ENCODE measurements at regions of chr19 and their contacts with region 1.

Region 1: GRCh38 chr19:48965040-48965805 is at the start of gene FTL:
- DNase-seq: peak; percentile 98 to 99 (median 98)
- H3K4me3 ChIP-seq: peak within 1 kb of the TSS; percentile 36 to 94 (median 58)
- H3K27ac ChIP-seq: peak within 1 kb of the TSS; percentile 71 to 96 (median 85)
- H3K4me1 ChIP-seq: peaks cover 31 to 34% of the 10 kb centered on the region in 2 donors
- H3K27me3 ChIP-seq: no peaks in the 10 kb centered on the region
- CTCF ChIP-seq: no peak
- POLR2A ChIP-seq: peak; percentile 100
- total RNA-seq, gene FTL: 3,284 to 11,726 (median 3,862) TPM

Region 2: DNA sequence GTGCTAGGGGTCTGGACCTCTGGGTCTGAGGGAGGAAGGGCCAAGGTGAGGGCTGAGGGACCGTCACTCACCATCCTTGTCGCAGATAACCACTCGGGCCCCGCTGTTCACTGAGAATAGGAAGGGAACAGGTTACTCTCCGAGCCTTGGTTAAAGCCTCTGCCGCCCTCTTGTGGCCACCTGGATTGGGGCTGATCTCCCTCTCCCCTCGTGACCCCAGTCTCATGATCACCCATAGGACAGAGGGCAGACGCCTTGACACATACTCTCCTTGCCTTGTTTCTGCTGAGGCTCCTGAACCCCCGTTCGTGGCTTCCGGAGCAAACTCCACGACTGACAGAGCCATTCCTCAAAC is 129.5 kb before region 1 on chr19:
- intact Hi-C with region 1: loop called in 1 of 2 experiments (anchors 5 kb)
- DNase-seq: peak; percentile 95 to 99 (median 97)
- H3K4me3 ChIP-seq: peak overlapping the region in 3 of 4 donors; percentile 62 to 67 (median 65)
- H3K27ac ChIP-seq: peak overlapping the region in 4 of 5 donors; percentile 39 to 91 (median 86)
- H3K4me1 ChIP-seq: peaks cover 4 to 7% of the 10 kb centered on the region in 2 donors
- H3K27me3 ChIP-seq: no peaks in the 10 kb centered on the region
- CTCF ChIP-seq: peak; percentile 76 to 97 (median 95)
- POLR2A ChIP-seq: peak in 1 of 2 donors; percentile 86

Region 3: DNA sequence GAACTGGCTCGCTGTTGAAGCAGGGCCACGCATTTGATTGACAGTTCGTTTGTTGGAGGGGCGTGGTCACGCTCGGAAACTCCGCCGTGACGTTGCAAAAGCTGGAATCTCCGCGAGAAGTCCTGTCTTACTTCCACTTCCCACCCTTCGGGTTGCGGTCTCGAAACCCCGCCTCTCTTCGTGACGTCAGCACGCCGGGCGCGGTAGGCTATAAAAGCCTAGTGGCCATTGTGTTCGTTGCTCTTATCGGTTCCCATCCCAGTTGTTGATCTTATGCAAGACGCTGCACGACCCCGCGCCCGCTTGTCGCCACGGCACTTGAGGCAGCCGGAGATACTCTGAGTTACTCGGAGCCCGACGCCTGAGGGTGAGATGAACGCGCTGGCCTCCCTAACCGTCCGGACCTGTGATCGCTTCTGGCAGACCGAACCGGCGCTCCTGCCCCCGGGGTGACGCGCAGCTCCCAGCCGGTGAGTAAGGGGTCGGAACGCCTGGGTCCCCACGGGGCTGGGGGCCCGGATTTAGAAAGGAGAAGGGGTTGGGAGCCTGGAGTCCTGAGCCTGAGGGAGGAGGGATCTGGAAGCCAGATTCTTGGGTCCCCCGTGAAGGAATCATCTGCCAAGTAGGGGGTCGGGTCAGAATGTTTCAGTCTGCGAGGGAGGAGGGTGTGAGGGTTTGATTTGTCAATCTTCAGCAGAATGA is 92.9 kb before region 1 on chr19 and contains the start of gene PPP1R15A:
- intact Hi-C with region 1: loop called in 1 of 2 experiments (anchors 10 kb)
- DNase-seq: peak; percentile 97 to 100 (median 99)
- H3K4me3 ChIP-seq: peak within 1 kb of the TSS; percentile 64 to 81 (median 80)
- H3K27ac ChIP-seq: peak within 1 kb of the TSS; percentile 97 to 100 (median 99)
- H3K4me1 ChIP-seq: peaks cover 34 to 43% of the 10 kb centered on the region in 2 donors
- H3K27me3 ChIP-seq: no peaks in the 10 kb centered on the region
- CTCF ChIP-seq: peak in 5 of 6 experiments; percentile 24 to 53 (median 42)
- POLR2A ChIP-seq: peak; percentile 100
- total RNA-seq, gene PPP1R15A: 18.2 to 54.6 (median 39.4) TPM